BJ (cell line): ENCODE measurements at regions of chr12 and their contacts with region 1.

Region 1: DNA sequence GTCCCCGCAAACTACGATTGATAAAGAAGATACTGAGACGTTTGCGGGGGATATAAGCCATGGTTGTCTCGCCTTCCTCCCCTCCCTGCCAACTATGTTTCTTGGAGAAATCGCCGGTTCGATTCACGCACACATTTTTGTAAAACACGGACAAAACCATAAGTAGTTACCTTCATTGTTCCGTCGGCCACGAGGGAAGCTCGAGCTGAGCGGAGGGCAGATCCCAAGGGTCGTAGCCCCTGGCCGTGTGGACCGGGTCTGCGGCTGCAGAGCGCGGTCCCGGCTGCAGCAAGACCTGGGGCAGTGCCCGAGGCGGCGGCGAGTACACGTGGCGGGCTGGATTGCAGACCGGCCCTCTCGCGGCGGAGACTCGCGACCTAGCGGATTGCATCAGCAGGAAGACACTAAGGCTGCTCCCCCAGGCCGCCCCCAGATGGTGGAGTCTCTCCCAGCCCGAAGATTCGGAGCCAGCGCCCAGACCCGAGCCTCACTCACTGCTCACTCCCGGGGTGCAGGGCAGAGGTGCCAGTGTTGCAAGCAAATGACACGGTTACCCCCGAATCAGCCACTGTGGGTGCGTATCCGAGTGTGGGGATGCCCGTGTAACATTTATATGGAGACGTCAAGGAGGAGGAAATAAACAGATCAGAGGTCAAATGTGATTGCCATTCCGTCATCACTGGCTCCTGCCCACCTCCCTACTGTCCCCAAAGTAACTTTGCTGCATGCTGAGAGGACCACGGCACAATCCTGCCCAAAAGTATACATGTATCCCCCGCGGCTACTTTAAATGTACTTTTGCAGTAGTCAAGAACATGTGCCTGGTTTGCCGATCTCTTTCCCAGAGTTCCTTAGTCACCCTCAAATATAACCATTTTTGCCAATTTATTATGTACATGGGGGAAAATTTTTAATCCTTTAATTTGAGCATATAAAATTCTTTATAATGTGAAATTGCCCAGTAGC is at the start of gene BCAT1:
- DNase-seq: no peak
- H3K4me3 ChIP-seq: peak within 1 kb of the TSS; percentile 70
- H3K27me3 ChIP-seq: no peaks in the 10 kb centered on the region
- CTCF ChIP-seq: peak; percentile 19; the same call in 1 of the 2 replicates
- polyA plus RNA-seq, gene BCAT1: 13.2 and 23.8 TPM in 2 replicates

Region 2: GRCh38 chr12:24798335-24798734 is 150.7 kb before region 1 on chr12:
- CTCF ChIA-PET with region 1: no interaction called
- POLR2A ChIA-PET with region 1: no interaction called
- DNase-seq: no peak
- H3K4me3 ChIP-seq: no peak overlapping the region
- H3K27me3 ChIP-seq: no peaks in the 10 kb centered on the region
- CTCF ChIP-seq: no peak

Region 3: DNA sequence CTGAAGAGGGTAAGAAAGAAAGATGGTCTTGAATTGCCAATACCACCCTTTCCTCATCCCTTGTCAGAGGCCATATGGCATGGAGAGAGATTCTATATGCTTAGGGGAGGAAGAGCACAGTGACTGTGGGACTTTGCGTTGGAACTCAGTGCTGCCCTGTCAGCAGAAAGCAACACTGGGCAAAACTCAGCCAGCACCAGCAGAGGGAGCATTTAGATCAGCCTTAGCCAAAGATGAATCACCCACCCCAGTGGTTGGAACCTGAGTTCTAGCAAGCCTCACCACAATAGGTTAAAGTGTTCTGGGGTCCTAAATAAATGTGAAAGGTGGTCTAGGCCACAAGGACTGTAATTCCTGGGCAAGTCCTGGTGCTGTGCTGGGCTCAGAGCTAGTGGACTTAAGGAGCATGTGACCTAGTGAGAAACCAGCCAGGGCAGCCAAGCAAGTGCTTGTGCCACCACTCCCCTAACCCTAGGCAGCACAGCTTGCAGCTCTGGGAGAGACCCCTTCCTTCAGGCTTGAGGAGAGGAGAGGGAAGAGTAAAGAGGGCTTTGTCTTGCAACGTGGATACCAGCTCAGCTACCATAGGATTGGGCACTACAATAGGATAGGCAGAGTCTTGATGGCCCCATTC is 11.3 kb after region 1 on chr12:
- CTCF ChIA-PET with region 1: interaction called, 11 read pairs
- POLR2A ChIA-PET with region 1: no interaction called
- DNase-seq: no peak
- H3K4me3 ChIP-seq: no peak overlapping the region
- H3K27me3 ChIP-seq: no peaks in the 10 kb centered on the region
- CTCF ChIP-seq: peak; percentile 84

Region 4: DNA sequence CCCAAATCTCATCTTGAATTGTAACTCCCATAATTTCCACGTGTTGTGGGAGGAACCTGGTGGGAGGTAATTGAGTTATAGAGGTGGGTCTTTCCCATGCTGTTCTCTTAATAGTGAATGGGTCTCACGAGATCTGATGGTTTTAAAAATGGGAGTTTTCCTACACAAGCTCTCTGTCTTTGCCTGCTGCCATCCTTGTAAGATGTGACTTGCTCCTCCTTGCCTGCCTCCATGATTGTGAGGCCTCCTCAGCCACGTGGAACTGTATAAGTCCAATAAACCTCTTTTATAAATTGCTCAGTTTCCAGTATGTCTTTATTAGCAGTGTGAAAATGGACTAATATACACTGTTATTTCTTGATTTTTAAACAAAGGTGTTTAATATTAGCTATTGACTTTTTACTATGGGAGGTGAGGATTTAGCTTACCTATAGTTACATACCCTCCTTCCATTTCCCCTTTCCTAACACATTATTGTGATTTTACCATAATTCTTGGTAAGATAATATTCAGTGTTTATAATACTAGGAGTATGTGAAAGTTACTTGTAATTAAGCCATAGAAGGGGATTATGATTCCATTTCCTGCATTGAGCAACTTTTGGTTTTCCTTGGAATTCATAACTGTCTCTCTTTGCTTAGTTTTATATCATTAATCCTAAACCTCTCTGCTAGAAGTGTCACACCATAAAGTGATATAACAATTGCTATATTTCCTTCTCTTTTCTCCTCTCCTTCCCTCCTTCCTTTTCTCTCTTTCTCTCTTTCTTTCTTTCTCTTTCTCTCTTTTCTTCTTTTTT is 452.7 kb after region 1 on chr12:
- CTCF ChIA-PET with region 1: no interaction called
- POLR2A ChIA-PET with region 1: interaction called, 16 read pairs
- DNase-seq: no peak
- H3K4me3 ChIP-seq: no peak overlapping the region
- H3K27me3 ChIP-seq: no peaks in the 10 kb centered on the region
- CTCF ChIP-seq: no peak